Left ventricle myocardium inferior (tissue), 1 donor: ENCODE measurements at regions of chr22 and their contacts with region 1.

Region 1: GRCh38 chr22:30381264-30381663 is 5.9 kb downstream of the RNF215 start:
- DNase-seq: no peak
- H3K4me3 ChIP-seq: no peak overlapping the region
- H3K27ac ChIP-seq: no peak overlapping the region
- H3K4me1 ChIP-seq: peaks cover 12% of the 10 kb centered on the region
- H3K27me3 ChIP-seq: no peaks in the 10 kb centered on the region
- CTCF ChIP-seq: no peak

Region 2: GRCh38 chr22:30038219-30038618 is 343.0 kb before region 1 on chr22:
- intact Hi-C with region 1: no loop called
- DNase-seq: no peak
- H3K4me3 ChIP-seq: no peak overlapping the region
- H3K27ac ChIP-seq: no peak overlapping the region
- H3K4me1 ChIP-seq: no peaks in the 10 kb centered on the region
- H3K27me3 ChIP-seq: no peaks in the 10 kb centered on the region
- CTCF ChIP-seq: no peak

Region 3: GRCh38 chr22:30262917-30263741 is 118.1 kb before region 1 on chr22:
- intact Hi-C with region 1: loop called (anchors 5 kb)
- DNase-seq: peak; percentile 75
- H3K4me3 ChIP-seq: peak overlapping the region; percentile 32
- H3K27ac ChIP-seq: no peak overlapping the region
- H3K4me1 ChIP-seq: peaks cover 6% of the 10 kb centered on the region
- H3K27me3 ChIP-seq: peaks cover 64% of the 10 kb centered on the region
- CTCF ChIP-seq: peak; percentile 99

Region 4: GRCh38 chr22:30423982-30424963 is 43.0 kb after region 1 on chr22:
- intact Hi-C with region 1: no loop called
- DNase-seq: peak; percentile 99
- H3K4me3 ChIP-seq: peak overlapping the region; percentile 89
- H3K27ac ChIP-seq: peak overlapping the region; percentile 99
- H3K4me1 ChIP-seq: peaks cover 50% of the 10 kb centered on the region
- H3K27me3 ChIP-seq: no peaks in the 10 kb centered on the region
- CTCF ChIP-seq: no peak